GM13976 (cell line): ENCODE measurements at regions of chr10 and their contacts with region 1.

Region 1: GRCh38 chr10:84388148-84388547 is 59.8 kb downstream of the CCSER2 start:
- DNase-seq: no peak
- CTCF ChIP-seq: no peak

Region 2: GRCh38 chr10:84237199-84238051 is 150.7 kb before region 1 on chr10:
- in situ Hi-C with region 1: no loop called
- DNase-seq: no peak
- CTCF ChIP-seq: no peak

Region 3: DNA sequence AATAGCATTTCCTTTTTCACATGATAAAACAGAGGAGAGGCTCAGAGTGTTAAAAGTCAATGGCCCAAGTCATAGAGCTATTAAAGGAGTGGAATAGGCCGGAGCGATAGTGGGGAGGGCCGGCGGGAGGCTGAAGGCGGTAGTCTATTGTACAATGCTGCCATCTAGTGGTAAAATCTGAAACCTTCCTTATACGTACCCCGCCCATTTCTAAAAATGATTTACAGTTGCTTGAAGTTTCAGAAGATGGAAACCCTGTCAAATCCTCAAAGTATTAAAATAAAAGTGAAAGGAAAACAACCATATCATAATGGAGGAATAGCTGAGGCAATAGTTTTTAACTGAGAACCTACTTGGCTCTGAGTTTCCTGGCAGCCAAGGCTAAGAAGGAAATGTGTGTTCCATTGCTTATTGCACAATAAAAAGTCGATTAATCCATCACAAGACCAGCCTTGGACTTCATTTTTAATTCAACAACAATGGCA is 149.3 kb after region 1 on chr10:
- in situ Hi-C with region 1: loop called (anchors 10 kb)
- DNase-seq: peak; percentile 76
- CTCF ChIP-seq: peak; percentile 48